ENCODE measurements at regions of chr18 and their contacts with region 1.

Region 1: DNA sequence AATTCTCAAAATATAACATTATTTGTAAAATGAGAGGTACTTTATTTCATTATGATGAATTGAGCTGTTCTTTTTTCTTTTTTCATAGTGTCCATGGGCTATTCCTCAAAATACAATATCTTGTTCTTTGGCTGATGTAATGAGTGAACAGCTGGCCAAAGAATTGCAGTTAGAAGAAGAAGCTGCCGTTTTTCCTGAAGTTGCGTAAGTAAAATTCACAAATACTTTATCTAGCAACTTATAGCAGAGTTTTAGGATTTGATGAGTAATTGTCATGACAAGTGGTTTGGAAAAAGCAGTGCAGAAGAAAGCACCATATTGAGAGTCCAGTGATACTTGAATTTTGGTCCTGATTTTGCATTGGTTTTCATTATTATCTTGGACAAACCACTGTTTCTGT is 9.8 kb downstream of the RIOK3 start:
- DNase-seq: peak; percentile 60
- ATAC-seq: peak; percentile 21; the same call in 1 of the 2 replicates
- H3K4me3 ChIP-seq: no peak overlapping the region
- H3K27ac ChIP-seq: no peak overlapping the region
- H3K4me1 ChIP-seq: peaks cover 3% of the 10 kb centered on the region; the same call in 1 of the 2 replicates
- H3K27me3 ChIP-seq: no peaks in the 10 kb centered on the region
- CTCF ChIP-seq: no peak
- POLR2A ChIP-seq: no peak
- RAD21 ChIP-seq: no peak

Region 2: DNA sequence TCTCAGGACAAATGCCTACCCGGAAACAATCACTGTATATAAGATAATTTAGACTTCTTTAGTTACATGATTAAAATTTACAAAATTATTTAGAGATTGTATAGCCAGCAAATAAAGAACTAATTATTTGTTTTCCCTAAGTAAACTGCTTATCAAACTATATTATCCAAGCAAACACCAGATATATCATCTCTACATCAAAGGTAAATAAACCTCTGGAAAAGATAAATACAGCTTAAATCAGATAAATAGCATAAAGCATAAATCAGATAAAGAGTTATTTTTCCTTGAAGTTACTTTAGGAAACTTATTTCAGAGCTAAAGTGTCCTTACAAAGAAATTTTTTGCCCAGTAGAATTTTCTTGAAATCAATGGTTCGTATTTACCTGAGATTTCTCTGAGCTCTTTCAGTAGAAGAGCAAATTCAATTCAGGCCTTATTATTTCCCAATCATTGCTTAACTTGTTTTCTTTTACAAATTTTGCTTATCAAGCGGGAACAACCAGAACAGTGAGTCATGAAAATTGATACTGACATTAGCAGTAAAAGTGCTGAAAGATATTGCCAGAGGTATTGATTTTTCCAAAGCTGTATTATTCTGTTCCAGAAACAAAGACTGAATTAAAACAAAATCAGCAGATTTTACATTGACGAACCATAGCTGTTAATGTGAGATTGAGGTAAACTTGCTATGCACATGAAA is 20.1 kb before region 1 on chr18:
- CTCF ChIA-PET with region 1: no interaction called
- POLR2A ChIA-PET with region 1: no interaction called
- dilution Hi-C with region 1: no loop called
- in situ Hi-C with region 1: no loop called
- intact Hi-C with region 1: loop called (anchors 2 kb)
- DNase-seq: no peak
- ATAC-seq: no peak
- H3K4me3 ChIP-seq: no peak overlapping the region
- H3K27ac ChIP-seq: no peak overlapping the region
- H3K4me1 ChIP-seq: no peaks in the 10 kb centered on the region
- H3K27me3 ChIP-seq: peaks cover 7% of the 10 kb centered on the region; the same call in 1 of the 2 replicates
- CTCF ChIP-seq: no peak
- POLR2A ChIP-seq: no peak
- RAD21 ChIP-seq: no peak

Region 3: DNA sequence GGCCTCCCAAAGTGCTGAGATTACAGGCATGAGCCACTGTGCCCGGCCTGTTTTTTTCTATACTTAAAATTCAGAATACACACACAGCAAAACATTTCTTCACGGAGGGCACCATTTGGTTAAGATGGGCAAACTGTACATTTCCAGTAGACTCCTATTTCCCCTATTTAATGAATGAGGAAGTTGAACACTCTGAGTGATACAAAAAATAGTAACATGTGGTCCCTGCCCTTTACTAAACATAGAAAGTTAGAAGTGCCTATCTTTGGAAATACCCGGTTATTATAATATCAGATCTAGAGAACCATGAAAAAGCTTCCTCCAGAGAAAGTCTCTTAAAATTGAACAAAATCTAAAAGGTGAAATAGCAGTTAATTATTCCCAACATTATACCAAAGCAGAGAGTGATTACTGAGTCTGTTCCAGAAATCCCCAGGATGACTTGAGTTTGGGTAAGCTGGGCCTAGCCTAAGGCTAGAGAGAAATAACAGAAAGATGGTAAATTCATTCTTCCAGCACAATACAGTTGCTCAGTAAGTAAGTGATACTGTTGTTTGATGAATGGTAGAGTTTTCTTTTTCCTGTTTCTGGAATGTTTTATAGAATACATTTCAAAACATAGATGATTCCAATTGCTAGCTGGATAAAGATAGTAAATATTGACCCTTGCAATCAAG is 17.1 kb after region 1 on chr18:
- CTCF ChIA-PET with region 1: no interaction called
- POLR2A ChIA-PET with region 1: interaction called, 3 read pairs
- dilution Hi-C with region 1: no loop called
- in situ Hi-C with region 1: no loop called
- intact Hi-C with region 1: loop called (anchors 2 kb)
- DNase-seq: no peak
- ATAC-seq: no peak
- H3K4me3 ChIP-seq: no peak overlapping the region
- H3K27ac ChIP-seq: no peak overlapping the region
- H3K4me1 ChIP-seq: no peaks in the 10 kb centered on the region
- H3K27me3 ChIP-seq: no peaks in the 10 kb centered on the region
- CTCF ChIP-seq: no peak
- POLR2A ChIP-seq: no peak
- RAD21 ChIP-seq: no peak

Region 4: GRCh38 chr18:23563377-23564043 is 100.6 kb after region 1 on chr18:
- CTCF ChIA-PET with region 1: no interaction called
- POLR2A ChIA-PET with region 1: no interaction called
- dilution Hi-C with region 1: no loop called
- in situ Hi-C with region 1: no loop called
- intact Hi-C with region 1: no loop called
- DNase-seq: peak; percentile 73
- ATAC-seq: peak; percentile 66; the same call in 1 of the 2 replicates
- H3K4me3 ChIP-seq: no peak overlapping the region
- H3K27ac ChIP-seq: no peak overlapping the region
- H3K4me1 ChIP-seq: no peaks in the 10 kb centered on the region
- H3K27me3 ChIP-seq: no peaks in the 10 kb centered on the region
- CTCF ChIP-seq: no peak
- POLR2A ChIP-seq: no peak
- RAD21 ChIP-seq: no peak

Region 5: DNA sequence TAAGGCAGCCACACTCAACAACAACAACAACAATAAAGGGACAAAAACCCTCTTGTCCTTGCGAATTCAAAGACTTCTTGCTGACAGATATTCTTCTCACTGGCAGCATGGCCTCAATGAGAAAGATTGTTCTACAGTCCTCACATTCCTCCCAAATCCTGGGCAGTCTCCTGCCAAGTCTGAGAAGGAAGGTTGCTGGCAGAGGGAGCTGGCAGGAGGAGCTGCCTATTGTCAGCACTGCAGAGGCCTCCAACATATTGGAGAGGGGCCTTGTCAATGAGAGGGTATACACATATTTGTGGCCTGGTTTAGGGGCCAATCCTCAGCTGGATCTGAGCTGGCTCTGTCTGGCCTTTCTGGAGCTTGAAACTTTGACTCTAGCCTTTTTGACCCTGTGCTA is 289.9 kb after region 1 on chr18:
- CTCF ChIA-PET with region 1: no interaction called
- POLR2A ChIA-PET with region 1: no interaction called
- dilution Hi-C with region 1: no loop called
- in situ Hi-C with region 1: no loop called
- intact Hi-C with region 1: no loop called
- DNase-seq: no peak
- ATAC-seq: peak; percentile 72
- H3K4me3 ChIP-seq: no peak overlapping the region
- H3K27ac ChIP-seq: no peak overlapping the region
- H3K4me1 ChIP-seq: no peaks in the 10 kb centered on the region
- H3K27me3 ChIP-seq: peaks cover 19% of the 10 kb centered on the region
- CTCF ChIP-seq: no peak
- POLR2A ChIP-seq: no peak
- RAD21 ChIP-seq: no peak

Measured in IMR-90 (cell line).